ENCODE measurements at regions of chr3 and their contacts with region 1.

Region 1: DNA sequence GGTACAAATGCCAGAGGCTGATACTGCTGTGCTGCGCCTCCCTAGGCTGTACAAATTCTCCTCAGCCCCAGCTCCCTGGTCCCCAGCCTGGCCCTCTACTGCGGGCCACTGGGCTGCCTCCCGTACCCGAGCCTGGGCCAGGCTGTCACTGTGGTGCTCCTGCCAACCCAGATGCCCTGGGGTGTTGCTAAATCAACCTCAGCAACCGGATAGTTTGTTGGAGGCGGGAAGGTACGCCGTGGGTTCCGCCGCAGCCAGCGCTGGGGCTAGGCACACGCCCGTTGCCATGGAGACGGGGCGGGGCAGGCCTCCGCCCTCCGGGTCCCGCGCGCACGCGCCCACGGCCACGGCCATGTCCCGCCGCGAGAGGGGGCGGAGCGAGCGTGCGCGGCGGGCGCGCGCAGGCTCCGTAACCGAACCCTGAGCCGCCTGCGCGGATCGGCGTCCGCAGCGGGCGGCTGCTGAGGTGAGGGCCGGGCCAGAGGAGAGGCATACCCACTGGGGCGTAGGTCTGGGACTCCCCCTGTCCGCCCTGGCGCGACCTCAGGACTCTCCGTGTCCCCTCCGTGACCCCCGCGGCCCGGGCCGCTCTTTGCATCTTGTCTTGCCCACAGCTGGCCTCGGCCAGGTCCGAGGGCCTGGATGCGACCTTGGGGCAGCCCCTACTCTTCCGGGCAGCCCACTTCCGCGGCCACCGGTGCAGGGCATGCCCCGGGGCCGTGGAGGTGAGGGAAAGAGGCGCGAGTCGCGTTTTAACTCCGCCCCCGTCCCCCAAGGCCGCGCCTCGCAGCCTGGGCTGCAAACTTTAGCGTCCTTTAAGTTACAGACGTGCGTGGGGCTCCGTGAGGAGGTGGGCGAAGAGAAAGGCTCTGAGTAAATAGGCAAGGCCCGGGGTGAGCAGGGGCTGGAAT is at the start of gene TEX264:
- DNase-seq: peak; percentile 95 to 98 (median 97)
- ATAC-seq: peak; percentile 94 to 96
- H3K4me3 ChIP-seq: peak within 1 kb of the TSS; percentile 70
- H3K27ac ChIP-seq: peak within 1 kb of the TSS; percentile 88
- H3K4me1 ChIP-seq: peaks cover 7% of the 10 kb centered on the region
- H3K27me3 ChIP-seq: no peaks in the 10 kb centered on the region
- total RNA-seq, gene TEX264: 37.6 to 40.2 (median 38.3) TPM

Region 2: GRCh38 chr3:51391075-51391567 is 280.0 kb before region 1 on chr3 and contains the start of gene RBM15B:
- intact Hi-C with region 1: loop called in 1 of 4 experiments (anchors 10 kb)
- DNase-seq: peak; percentile 98 to 100 (median 99)
- ATAC-seq: peak; percentile 93 to 96
- H3K4me3 ChIP-seq: peak within 1 kb of the TSS; percentile 73
- H3K27ac ChIP-seq: peak within 1 kb of the TSS; percentile 83
- H3K4me1 ChIP-seq: peaks cover 22% of the 10 kb centered on the region
- H3K27me3 ChIP-seq: no peaks in the 10 kb centered on the region
- total RNA-seq, gene RBM15B: 15.0 to 19.6 (median 15.6) TPM

Region 3: DNA sequence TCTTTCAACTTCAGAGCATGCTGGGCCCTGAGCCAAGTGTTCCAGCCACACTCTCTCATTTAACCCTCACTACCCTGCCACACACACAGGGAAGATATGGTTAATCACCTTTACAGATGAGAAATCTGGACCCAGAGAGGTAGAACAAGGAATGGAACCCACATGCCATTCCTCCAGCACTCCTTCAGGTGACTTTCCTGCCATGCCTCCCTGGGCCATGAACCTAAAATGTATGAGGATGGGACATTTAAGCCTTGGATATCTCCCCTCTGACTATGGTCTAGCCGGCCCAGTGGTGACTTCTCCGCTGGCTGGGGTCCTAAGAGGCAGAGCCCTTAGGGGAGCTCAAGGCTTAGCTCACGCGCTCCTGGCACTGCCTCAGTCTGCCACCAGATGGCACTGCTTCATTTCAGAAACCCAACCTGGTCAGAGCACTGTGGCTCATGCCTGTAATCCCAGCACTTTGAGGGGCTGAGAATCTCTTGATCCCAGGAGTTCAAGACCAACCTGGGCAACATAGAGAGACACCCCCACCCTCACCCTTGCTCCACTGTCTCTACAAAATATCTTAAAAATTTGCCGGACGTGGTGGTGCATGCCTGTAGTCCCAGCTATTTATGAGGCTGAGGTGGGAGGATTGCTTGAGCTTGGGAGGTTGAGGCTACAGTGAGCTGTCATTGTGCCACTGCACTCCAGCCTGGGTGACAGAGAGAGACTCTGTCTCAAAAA is 169.1 kb before region 1 on chr3:
- intact Hi-C with region 1: loop called in 3 of 4 experiments (anchors 5 kb)
- DNase-seq: peak; percentile 78 to 93 (median 90)
- ATAC-seq: peak; percentile 12 to 21
- H3K4me3 ChIP-seq: no peak overlapping the region
- H3K27ac ChIP-seq: no peak overlapping the region
- H3K4me1 ChIP-seq: no peaks in the 10 kb centered on the region
- H3K27me3 ChIP-seq: no peaks in the 10 kb centered on the region

Region 4: DNA sequence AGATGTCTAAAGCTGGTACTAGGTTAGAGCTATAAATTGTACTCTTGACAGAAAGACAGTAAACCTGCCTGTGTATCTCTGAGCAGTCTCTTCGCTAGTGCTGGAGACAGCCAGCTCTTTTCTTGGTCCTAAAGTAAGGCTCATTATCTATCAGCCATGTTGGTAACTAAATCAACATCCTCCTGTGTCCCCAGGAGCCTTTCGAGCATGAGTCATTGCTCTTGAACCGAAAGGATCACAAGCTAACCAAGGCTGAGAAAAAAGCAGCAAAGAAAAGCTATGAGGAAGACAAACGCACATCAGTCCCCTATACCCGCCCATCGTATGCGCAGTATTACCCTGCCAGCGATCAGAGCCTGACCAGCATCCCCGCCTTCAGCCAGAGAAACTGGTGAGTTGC is 25.0 kb before region 1 on chr3:
- intact Hi-C with region 1: no loop called
- DNase-seq: no peak
- ATAC-seq: no peak
- H3K4me3 ChIP-seq: no peak overlapping the region
- H3K27ac ChIP-seq: no peak overlapping the region
- H3K4me1 ChIP-seq: no peaks in the 10 kb centered on the region
- H3K27me3 ChIP-seq: no peaks in the 10 kb centered on the region

Measured in right cardiac atrium (tissue), 5 donors.